Activated CD4-positive, alpha-beta memory T cell treated with anti-CD3 and anti-CD28 coated beads for 36 hours (primary cell): ENCODE measurements at regions of chr5 and their contacts with region 1.

Region 1: DNA sequence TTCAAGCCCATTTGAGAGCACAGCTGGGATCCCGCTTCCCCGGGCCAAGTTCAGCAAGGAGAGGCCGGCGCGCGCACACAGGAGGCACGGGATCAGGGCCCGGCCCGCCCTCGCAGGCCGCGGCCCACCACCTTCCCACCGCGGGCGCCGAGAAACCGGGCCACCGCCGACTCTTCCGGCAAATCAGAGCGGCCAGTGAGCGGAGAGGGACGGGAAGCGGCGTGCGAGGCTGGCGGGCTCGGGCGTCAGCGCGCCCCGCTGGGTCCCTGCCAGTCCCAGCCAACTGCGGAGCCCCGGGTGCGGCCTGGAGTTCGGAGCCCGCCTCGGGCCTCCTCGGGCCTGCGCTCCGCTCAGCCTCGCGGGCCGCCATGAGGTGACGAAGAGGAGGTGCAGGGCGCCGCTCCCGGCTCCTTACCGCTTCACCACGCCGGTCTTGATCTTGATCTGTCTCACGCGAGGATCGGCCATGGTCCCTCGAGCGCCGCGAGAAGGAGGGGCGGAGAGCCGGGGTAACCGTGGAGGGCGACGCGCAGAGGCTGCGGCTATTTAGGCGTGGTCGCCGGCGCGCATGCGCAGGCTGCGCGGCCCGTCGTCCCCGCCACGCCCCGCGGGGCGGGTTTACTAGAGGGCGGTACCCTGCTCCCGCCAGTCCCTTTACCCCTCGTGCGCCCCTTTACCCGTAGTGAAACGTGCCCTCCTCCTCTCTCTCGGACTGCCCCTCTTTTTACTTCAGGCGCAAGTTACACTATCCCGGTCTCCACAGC is at the start of gene TBCA:
- DNase-seq: peak; percentile 90
- H3K4me3 Mint-ChIP-seq: peak within 1 kb of the TSS; percentile 89
- H3K27ac Mint-ChIP-seq: peak within 1 kb of the TSS; percentile 95
- H3K4me1 Mint-ChIP-seq: peaks cover 44% of the 10 kb centered on the region
- H3K27me3 Mint-ChIP-seq: no peaks in the 10 kb centered on the region
- total RNA-seq, gene TBCA: 206 to 220 TPM

Region 2: GRCh38 chr5:77645158-77645994 is 130.6 kb before region 1 on chr5:
- CTCF ChIA-PET with region 1: interaction called, 4 read pairs
- POLR2A ChIA-PET with region 1: no interaction called
- intact Hi-C with region 1: loop called (anchors 5 kb)
- DNase-seq: peak; percentile 53
- H3K4me3 Mint-ChIP-seq: peak overlapping the region; percentile 48
- H3K27ac Mint-ChIP-seq: no peak overlapping the region
- H3K4me1 Mint-ChIP-seq: peaks cover 27% of the 10 kb centered on the region
- H3K27me3 Mint-ChIP-seq: peaks cover 66% of the 10 kb centered on the region

Region 3: DNA sequence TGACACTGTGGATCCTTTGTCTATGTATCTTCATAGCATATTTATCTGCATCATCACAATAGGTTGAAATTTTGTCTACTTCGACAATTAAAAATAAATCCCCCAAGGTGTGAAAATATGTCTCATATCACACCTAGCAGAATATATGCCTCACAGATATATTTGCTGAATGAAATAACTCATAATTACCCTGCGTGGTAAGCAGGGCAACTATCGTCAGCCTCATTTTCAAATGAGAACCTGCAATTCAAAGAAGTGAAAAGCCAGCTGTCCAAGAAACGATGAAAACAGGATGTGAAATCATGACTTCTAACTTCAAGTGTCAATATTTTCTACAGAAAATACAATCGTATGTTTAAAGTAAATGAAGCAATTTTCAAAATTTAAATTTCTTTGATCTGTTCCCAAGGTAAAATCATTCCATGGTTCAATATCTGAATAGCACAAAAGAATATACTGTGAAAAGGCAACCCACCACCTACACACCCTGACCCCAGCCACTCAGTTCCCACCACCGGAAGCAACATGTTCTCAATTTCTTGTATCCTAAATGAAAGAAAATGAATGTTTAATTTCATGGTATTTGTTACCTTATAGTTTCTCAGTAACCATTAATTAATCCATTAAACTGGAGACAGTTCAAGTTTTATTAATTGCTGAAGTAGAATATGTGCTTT is 56.9 kb before region 1 on chr5:
- CTCF ChIA-PET with region 1: no interaction called
- POLR2A ChIA-PET with region 1: no interaction called
- intact Hi-C with region 1: loop called (anchors 2 kb)
- DNase-seq: peak; percentile 18
- H3K4me3 Mint-ChIP-seq: no peak overlapping the region
- H3K27ac Mint-ChIP-seq: peak overlapping the region; percentile 88
- H3K4me1 Mint-ChIP-seq: peaks cover 29% of the 10 kb centered on the region
- H3K27me3 Mint-ChIP-seq: no peaks in the 10 kb centered on the region

Region 4: DNA sequence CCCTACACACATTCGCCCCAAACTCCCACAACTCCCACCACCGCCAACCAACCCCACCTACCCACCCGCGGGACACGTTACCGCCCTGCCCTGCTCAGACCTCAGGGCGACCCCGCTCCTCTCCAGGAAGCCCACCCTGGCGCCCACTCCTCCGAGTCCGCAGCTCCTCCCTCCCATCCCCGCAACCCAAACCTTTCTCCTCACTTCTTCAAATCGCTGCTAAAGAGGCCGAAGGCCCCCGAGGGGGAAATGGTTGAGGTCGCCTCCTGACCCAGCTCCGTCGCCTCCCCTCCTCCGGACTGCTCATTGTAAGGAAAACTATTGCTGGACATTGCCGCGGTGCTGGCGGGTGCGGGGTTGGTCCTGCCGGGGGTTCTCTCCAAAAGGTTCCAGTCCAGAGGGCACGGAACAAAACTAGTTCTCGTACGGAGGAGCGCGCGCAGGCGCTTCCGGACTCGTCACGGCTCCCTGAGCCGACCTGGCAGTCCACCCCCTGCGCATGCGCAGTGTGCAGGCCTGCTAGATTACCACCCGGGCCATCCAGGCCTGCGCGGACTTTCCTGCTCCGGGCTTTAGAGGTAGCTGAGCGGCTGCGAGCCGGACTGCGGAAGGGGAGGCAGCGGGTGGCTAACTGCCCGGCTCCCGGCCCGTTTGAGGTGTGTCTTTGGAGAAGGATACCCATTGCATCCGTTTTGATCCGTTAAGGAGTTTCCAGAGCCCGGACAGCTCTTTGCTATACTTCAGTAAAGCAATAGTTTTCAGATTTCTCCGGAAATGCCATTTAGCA is 518.5 kb after region 1 on chr5 and contains the start of gene AP3B1:
- CTCF ChIA-PET with region 1: no interaction called
- POLR2A ChIA-PET with region 1: no interaction called
- intact Hi-C with region 1: loop called (anchors 2 kb)
- DNase-seq: peak; percentile 98
- H3K4me3 Mint-ChIP-seq: peak within 1 kb of the TSS; percentile 95
- H3K27ac Mint-ChIP-seq: peak within 1 kb of the TSS; percentile 96
- H3K4me1 Mint-ChIP-seq: peaks cover 37% of the 10 kb centered on the region
- H3K27me3 Mint-ChIP-seq: no peaks in the 10 kb centered on the region
- total RNA-seq, gene AP3B1: 36.5 to 40.2 TPM